ENCODE measurements at regions of chr3 and their contacts with region 1.

Region 1: DNA sequence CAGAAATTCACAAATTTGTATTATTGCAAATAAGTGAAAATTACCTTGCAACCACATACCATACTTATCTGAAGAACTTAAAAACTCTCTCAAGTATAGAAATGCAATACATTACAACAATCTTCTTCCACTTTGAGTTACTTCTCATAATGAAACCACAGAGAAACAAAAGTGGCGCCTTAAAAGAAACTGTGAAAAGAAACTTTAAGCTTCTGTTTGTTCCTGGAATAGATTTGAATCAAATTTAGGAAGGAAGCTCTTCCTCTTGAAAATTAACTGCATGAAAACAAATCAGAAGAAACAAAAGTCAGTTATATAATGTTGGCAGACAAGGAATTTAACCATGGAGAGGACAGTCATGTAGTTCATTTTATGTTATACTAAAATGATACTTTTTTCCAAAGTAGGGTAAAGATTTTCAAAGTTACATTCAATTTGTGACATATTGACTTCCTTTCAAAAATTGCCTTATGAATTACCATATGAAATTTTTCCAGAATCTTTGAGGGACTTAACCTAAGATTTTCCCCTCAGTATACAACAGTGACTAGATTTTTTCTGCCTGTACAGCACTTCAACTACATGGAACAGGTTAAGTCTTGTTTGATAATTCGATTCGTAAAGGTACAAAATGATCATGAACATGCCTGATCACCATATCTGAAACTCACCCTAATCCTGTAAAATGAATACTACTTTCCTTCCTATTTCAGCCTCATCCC is 57.6 kb upstream of the TNFSF10 start:
- DNase-seq: no peak
- H3K4me3 Mint-ChIP-seq: peak overlapping the region; percentile 22
- H3K27ac Mint-ChIP-seq: peak overlapping the region; percentile 85
- H3K4me1 Mint-ChIP-seq: peaks cover 85% of the 10 kb centered on the region
- H3K27me3 Mint-ChIP-seq: no peaks in the 10 kb centered on the region

Region 2: GRCh38 chr3:172039436-172040077 is 541.3 kb before region 1 on chr3 and contains the start of gene FNDC3B:
- CTCF ChIA-PET with region 1: no interaction called
- intact Hi-C with region 1: loop called (anchors 2 kb)
- DNase-seq: peak; percentile 96
- H3K4me3 Mint-ChIP-seq: peak within 1 kb of the TSS; percentile 91
- H3K27ac Mint-ChIP-seq: peak within 1 kb of the TSS; percentile 89
- H3K4me1 Mint-ChIP-seq: peaks cover 21% of the 10 kb centered on the region
- H3K27me3 Mint-ChIP-seq: no peaks in the 10 kb centered on the region
- total RNA-seq, gene FNDC3B: 9.2 to 13.5 TPM

Region 3: DNA sequence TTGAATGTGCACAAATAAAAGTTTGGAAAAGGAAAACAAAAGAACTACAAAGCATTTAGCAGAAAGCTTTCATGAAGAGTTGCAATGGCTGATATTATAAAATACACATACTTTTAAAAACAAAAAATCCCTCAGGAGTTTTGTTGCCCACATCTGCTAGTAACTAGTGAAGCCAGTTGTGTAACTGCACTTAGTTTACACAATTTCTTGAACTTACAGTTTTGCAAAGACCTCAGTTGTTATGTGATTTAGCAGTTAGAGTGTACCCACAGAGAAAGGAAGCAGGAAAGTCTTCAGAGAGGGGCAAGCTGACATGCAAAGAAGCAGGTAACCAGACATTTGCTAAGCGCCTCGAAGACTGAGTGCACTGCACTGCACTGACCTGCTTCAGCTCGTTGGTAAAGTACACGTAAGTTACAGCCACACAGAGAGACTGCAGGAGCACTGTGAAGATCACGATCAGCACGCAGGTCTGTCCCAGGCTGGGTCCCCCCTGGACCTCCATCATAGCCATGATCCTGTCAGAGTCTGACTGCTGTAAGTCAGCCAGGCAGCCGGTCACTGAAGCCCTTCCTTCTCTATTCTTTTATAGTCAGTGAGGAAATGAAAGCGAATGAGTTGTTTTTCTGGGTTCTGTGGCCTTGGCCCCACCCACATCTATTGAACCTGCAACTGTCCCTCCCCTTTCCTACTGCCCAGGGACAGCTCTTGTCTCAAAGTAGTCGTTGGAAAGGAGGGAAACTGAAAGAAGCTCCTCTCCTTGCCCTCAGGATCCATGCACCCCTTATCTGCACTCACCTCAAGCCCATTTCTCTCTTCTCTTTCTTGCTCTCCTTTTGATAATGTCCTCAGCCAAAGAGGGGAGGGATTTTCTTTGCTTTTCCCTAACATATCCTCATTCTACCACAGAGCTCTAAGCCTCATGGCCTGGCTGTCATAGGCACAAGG is 57.7 kb before region 1 on chr3 and contains the start of gene TNFSF10:
- CTCF ChIA-PET with region 1: interaction called, 3 read pairs
- intact Hi-C with region 1: loop called (anchors 2 kb)
- DNase-seq: peak; percentile 78
- H3K4me3 Mint-ChIP-seq: peak within 1 kb of the TSS; percentile 96
- H3K27ac Mint-ChIP-seq: peak within 1 kb of the TSS; percentile 96
- H3K4me1 Mint-ChIP-seq: peaks cover 42% of the 10 kb centered on the region
- H3K27me3 Mint-ChIP-seq: no peaks in the 10 kb centered on the region
- total RNA-seq, gene TNFSF10: 31.8 to 32.7 TPM

Region 4: DNA sequence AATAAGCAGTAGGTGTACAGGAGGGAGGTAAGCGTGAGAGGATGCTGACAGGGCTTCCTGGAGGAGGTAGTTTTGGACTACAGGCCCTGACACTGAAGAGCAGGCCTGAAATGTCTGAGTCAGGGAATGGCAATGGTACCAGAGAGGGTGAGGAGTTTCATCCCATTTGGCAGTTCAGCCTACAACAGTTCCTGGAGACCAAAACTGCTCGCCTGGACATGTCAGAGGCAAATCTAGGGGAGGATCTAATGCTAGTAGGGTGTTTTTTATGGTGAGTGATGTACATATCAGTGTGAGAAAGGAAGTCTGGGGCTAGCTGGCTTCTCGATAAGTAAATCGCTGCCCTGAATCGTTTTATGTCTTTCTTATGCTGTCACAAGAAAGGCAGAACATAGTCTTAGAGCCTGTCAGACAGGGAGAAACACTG is 43.8 kb before region 1 on chr3:
- CTCF ChIA-PET with region 1: interaction called, 3 read pairs
- intact Hi-C with region 1: loop called (anchors 1 kb)
- DNase-seq: peak; percentile 49
- H3K4me3 Mint-ChIP-seq: peak overlapping the region; percentile 8
- H3K27ac Mint-ChIP-seq: peak overlapping the region; percentile 91
- H3K4me1 Mint-ChIP-seq: peaks cover 40% of the 10 kb centered on the region
- H3K27me3 Mint-ChIP-seq: no peaks in the 10 kb centered on the region

Region 5: DNA sequence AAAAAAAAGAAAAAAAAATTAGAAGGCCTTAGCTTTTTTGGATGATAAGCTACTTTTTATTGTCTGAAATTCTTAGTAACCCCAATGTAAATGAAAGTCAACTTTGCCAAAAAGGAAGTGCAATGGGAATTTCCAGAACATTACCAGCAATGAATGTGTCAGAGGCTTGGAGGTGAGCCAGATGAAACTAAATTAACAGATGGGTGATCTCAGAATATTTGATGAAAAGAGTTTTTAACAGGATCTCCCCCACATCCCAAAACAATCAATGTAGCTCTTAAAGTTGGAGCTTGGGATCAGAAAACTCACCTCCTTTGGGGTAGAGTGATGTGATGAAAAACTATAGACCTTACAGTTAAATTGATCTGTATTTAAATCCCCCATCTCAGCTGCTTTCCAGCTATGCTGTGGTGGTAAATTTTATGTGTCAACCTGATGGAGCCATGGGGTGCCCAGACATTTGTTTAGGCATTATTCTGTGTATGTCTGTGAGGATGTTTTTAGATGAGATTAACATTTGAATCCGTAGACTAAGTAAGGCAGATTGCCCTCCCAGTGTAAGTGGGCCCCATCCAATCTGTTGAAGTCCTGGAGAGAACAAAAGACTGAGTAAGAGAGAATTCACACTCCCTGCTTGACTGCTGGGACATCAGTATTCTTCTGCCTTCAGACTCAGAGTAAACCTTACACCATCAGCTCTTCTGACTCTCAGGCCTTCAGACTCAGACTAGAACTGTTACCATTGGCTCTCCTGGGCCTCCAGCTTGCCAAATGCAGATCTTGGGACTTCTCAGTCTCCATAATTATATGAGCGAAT is 26.7 kb after region 1 on chr3:
- CTCF ChIA-PET with region 1: no interaction called
- intact Hi-C with region 1: loop called (anchors 1 kb)
- DNase-seq: peak; percentile 51
- H3K4me3 Mint-ChIP-seq: no peak overlapping the region
- H3K27ac Mint-ChIP-seq: peak overlapping the region; percentile 61
- H3K4me1 Mint-ChIP-seq: peaks cover 11% of the 10 kb centered on the region
- H3K27me3 Mint-ChIP-seq: no peaks in the 10 kb centered on the region

Measured in activated naive CD4-positive, alpha-beta T cell treated with anti-CD3 and anti-CD28 coated beads for 36 hours (primary cell).